ENCODE measurements at regions of chr12 and their contacts with region 1.

Region 1: GRCh38 chr12:122793685-122794106 is 19.3 kb downstream of the CCDC62 start:
- DNase-seq: no peak
- H3K4me3 ChIP-seq: no peak overlapping the region
- CTCF ChIP-seq: peak; percentile 34

Region 2: DNA sequence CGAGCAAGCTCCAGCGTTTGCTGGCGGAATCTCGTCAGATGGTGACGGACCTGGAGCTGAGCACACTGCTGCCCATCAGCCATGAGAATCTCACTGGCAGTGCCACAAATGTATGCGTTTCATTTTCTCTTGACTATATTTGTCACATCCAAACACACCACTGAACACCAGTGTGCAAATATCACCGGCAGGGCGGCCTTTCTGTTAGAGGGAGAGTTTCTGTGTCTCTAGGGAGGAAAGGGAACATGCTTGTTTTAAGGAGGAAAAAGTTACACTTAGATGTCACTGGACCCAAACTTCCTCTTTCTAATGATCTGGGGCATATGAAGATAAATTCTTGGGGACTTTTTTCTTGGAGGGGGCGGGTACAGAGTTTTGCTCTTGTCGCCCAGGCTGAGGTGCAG is 19.6 kb after region 1 on chr12:
- CTCF ChIA-PET with region 1: interaction called, 115 read pairs
- POLR2A ChIA-PET with region 1: interaction called, 3 read pairs
- DNase-seq: no peak
- H3K4me3 ChIP-seq: no peak overlapping the region
- CTCF ChIP-seq: no peak

Region 3: DNA sequence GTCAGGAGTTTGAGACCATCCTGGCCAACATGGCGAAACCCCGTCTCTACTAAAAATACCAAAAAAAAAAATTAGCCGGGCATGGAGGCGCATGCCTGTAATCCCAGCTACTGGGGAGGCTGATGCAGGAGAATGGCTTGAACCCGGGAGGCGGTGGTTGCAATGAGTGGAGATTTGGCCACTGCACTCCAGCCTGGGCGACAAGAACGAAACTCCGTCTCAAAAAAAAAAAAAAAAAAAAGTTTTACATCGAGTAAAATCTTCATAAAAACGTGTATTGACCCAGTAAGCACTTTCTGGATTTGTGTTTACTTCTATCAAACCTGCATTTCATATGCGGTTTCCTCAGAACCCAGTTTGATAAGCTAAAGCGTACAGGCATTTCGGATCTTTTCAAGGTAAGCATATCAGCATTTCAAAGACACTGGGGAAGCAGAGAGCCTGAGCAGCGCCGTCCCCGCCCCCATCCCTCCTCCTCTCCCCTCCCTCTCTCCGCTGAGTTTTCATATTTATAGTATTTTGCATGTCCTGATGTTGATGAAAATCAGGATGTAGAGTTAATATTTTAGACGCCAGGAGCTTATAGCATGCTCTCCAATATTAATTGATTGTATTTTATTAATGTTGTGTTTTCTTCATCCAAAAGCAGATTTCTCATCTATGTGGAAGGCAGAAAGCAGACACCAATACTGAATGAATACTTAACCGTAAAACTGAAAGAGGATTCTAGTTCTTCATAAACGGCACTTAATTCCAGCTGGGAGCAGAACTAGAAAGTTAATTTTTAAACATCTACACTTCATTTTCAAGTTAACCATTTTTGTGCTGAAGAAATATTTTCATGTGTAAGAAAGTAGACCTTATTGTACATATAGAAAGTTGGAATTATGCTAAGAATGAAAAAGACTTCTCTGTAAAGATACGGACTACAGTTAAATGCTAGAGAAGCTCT is 32.4 kb after region 1 on chr12:
- CTCF ChIA-PET with region 1: interaction called, 30 read pairs
- POLR2A ChIA-PET with region 1: interaction called, 3 read pairs
- DNase-seq: no peak
- H3K4me3 ChIP-seq: peak overlapping the region; percentile 15
- CTCF ChIP-seq: no peak

Region 4: GRCh38 chr12:122860346-122861090 is 66.8 kb after region 1 on chr12:
- CTCF ChIA-PET with region 1: interaction called, 25 read pairs
- POLR2A ChIA-PET with region 1: no interaction called
- DNase-seq: no peak
- H3K4me3 ChIP-seq: no peak overlapping the region
- CTCF ChIP-seq: peak; percentile 95

Region 5: GRCh38 chr12:122909442-122910288 is 116.0 kb after region 1 on chr12:
- CTCF ChIA-PET with region 1: no interaction called
- POLR2A ChIA-PET with region 1: no interaction called
- DNase-seq: no peak
- H3K4me3 ChIP-seq: no peak overlapping the region
- CTCF ChIP-seq: no peak

Region 6: GRCh38 chr12:122951979-122952892 is 158.5 kb after region 1 on chr12:
- CTCF ChIA-PET with region 1: interaction called, 54 read pairs
- POLR2A ChIA-PET with region 1: no interaction called
- DNase-seq: no peak
- H3K4me3 ChIP-seq: no peak overlapping the region
- CTCF ChIP-seq: peak; percentile 96

Measured in AG04449 (cell line).